Posterior vena cava (tissue), 2 donors: ENCODE measurements at regions of chr1 and their contacts with region 1.

Region 1: GRCh38 chr1:65658122-65658521 is 134.6 kb upstream of the PDE4B start:
- DNase-seq: no peak

Region 2: GRCh38 chr1:65590279-65590678 is 67.8 kb before region 1 on chr1:
- intact Hi-C with region 1: no loop called
- DNase-seq: no peak

Region 3: DNA sequence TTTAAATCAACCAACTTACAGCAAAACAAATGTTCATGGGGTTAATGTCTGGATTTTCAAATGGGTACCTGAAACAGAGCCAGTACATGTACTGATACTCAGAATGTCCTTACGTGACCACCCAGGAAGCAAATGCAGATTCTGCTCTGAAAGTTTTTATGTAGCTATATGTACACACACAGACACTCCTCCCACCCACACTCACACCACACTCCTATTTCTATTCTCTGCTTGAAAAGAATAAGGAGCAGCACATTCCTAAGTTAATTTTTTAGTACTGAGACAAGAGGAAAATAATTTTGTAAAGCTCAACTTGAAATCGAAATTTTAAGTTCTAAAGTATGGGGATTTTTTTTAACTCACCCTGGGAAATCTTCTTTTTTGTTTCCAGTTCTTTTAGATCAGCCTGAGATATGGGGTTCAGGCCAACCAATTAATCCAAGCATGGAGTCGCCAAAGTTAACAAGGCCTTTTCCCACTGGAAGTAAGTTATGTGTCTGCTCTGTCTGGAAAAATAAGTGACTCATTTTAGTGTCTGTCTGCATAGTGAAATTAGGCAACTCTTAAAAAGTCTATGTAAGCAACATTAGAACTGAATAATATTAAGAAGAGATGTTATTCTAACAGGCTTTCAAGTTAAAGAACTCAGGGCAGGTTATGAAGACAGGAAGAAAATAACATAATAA is 1018.6 kb after region 1 on chr1:
- intact Hi-C with region 1: loop called in 1 of 2 experiments (anchors 5 kb)
- DNase-seq: no peak

Region 4: GRCh38 chr1:66996018-66996682 is 1338.0 kb after region 1 on chr1:
- intact Hi-C with region 1: no loop called
- DNase-seq: no peak